Caco-2 (cell line): ENCODE measurements at regions of chr5 and their contacts with region 1.

Region 1: GRCh38 chr5:135944967-135945560 is 9.7 kb downstream of the LECT2 start:
- DNase-seq: peak; percentile 60 to 76
- H3K4me3 ChIP-seq: no peak overlapping the region
- H3K4me3 Mint-ChIP-seq: no peak overlapping the region
- H3K27ac Mint-ChIP-seq: no peak overlapping the region
- H3K4me1 ChIP-seq: peaks cover under 1% of the 10 kb centered on the region; the same call in 1 of the 2 replicates
- H3K4me1 Mint-ChIP-seq: no peaks in the 10 kb centered on the region
- H3K27me3 ChIP-seq: no peaks in the 10 kb centered on the region
- H3K27me3 Mint-ChIP-seq: no peaks in the 10 kb centered on the region
- CTCF ChIP-seq: peak; percentile 79 to 80

Region 2: DNA sequence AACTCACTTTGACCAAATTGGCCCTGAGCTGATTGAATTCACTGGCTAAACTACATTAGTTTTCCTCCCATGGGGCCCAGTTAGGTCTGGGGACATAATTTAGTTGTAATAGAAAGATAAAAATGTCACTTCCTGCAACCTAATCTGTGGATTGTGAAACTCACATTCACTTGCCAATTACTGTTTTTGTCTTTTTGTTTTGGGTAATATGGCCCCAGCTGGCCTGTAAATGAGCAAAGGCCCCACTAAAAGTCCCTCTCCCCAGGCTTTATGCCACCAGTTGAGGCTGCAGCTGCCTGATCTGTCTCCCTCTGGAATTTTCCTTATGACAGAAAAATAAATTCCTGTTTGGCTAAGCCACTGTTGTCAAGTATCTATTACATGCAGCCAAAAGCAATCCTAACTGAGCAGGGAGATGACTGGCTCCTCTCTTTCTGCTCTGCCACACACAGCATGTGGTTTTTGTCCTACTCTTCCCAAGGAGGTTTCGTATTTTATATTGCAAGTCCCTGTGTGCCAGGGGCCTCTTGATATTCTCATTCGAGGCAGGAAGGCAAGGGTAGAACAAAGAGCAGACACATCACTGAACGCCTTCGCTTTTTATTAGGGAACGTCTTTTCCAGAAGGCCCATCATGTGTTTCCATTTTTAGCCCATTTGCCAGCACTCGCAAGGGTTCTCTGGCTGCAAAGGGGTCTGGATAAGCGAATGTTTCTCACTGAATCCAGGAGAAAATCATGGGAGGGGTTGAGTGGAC is 134.7 kb before region 1 on chr5:
- CTCF ChIA-PET with region 1: no interaction called
- POLR2A ChIA-PET with region 1: no interaction called
- intact Hi-C with region 1: no loop called
- DNase-seq: no peak
- H3K4me3 ChIP-seq: no peak overlapping the region
- H3K4me3 Mint-ChIP-seq: no peak overlapping the region
- H3K27ac Mint-ChIP-seq: no peak overlapping the region
- H3K4me1 ChIP-seq: no peaks in the 10 kb centered on the region
- H3K4me1 Mint-ChIP-seq: peaks cover 9% of the 10 kb centered on the region
- H3K27me3 ChIP-seq: no peaks in the 10 kb centered on the region
- H3K27me3 Mint-ChIP-seq: peaks cover 16% of the 10 kb centered on the region
- CTCF ChIP-seq: no peak

Region 3: DNA sequence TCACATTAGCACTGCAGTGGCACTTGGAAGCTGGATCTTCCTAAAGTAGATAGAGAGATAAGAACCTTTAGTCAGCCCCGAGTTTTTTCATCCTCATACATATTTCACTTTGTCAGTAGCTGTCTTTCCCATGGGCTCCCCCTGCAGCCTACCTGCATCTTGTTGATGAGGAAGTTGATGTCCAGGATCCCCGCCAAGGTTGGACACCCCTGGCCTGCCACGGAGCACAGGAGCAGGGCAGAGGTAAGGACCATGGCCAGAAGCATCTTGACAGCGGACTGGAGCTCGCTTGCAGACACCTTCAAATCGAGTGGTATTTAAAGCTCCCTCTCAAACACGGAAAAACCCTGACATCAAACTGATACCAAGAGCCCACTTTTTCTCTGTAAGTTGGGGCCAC is 49.5 kb before region 1 on chr5 and contains the start of gene IL9:
- CTCF ChIA-PET with region 1: no interaction called
- POLR2A ChIA-PET with region 1: no interaction called
- intact Hi-C with region 1: loop called (anchors 2 kb)
- DNase-seq: peak in 1 of 2 experiments; percentile 41
- H3K4me3 ChIP-seq: no peak within 1 kb of the TSS
- H3K4me3 Mint-ChIP-seq: no peak within 1 kb of the TSS
- H3K27ac Mint-ChIP-seq: no peak within 1 kb of the TSS
- H3K4me1 ChIP-seq: peaks cover 23% of the 10 kb centered on the region
- H3K4me1 Mint-ChIP-seq: peaks cover 32% of the 10 kb centered on the region
- H3K27me3 ChIP-seq: no peaks in the 10 kb centered on the region
- H3K27me3 Mint-ChIP-seq: peaks cover 4% of the 10 kb centered on the region
- CTCF ChIP-seq: no peak
- total RNA-seq, gene IL9: 0.79 TPM in 1 of 2 replicates, not detected in the other

Region 4: DNA sequence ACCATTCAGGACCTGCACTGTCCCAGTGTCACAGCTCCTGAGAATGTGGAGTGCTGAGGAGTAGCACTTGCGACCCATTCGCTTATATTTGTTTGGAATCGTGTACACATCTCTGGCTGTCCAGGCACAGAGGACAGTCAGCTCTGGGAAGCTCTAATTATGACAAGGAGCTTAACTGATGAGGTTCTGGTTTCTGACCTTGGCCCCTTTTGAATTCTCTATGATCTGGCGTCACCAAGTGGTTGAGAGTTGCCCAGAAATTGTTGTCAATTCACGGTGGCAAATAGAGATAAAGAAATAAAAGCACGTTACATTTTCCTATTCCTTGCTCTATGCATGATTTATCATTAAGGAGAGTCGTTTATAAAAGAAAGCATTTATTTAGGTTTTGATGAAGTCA is 44.6 kb after region 1 on chr5:
- CTCF ChIA-PET with region 1: no interaction called
- POLR2A ChIA-PET with region 1: no interaction called
- intact Hi-C with region 1: loop called (anchors 1 kb)
- DNase-seq: no peak
- H3K4me3 ChIP-seq: no peak overlapping the region
- H3K4me3 Mint-ChIP-seq: no peak overlapping the region
- H3K27ac Mint-ChIP-seq: no peak overlapping the region
- H3K4me1 ChIP-seq: no peaks in the 10 kb centered on the region
- H3K4me1 Mint-ChIP-seq: no peaks in the 10 kb centered on the region
- H3K27me3 ChIP-seq: no peaks in the 10 kb centered on the region
- H3K27me3 Mint-ChIP-seq: no peaks in the 10 kb centered on the region
- CTCF ChIP-seq: peak in 1 of 2 experiments; percentile 26

Region 5: DNA sequence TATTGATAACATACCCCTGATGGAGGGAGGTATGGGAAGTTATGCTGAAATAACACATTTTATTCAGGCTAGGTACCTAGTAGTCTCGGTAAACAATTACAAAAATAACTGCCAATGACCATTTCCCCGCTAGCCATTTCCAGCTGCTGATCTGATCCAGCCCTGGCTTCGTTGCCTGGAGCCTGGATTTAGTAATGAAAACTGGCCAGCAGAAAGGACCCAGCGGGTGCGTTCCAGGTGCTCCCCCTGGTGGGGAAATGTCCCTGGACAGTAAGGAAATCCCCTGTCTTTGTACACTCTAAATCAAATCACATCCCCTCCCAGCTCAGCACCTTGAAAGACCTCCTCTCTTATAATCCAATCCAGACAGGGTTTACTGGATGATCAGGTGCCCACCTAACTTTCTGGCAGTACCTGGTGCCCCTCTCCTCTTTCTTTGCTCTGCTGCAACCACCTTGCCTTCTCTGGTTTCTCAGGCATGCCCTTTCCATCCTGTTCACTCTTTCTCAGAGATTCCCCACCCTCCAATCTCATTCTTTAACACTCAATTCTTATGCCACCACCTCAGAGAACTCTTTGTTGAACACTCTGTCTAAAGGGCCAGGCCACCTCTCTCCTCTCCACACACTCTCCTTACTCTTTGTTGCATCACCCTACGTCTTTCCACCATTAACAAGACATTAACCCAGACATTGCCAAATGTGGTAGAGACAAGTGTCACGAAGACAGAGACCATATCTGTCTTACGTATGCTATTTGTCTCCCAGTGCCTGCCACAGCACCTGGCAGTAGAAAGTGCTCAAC is 137.5 kb after region 1 on chr5:
- CTCF ChIA-PET with region 1: no interaction called
- POLR2A ChIA-PET with region 1: no interaction called
- intact Hi-C with region 1: loop called (anchors 1 kb)
- DNase-seq: peak; percentile 78 to 85
- H3K4me3 ChIP-seq: no peak overlapping the region
- H3K4me3 Mint-ChIP-seq: no peak overlapping the region
- H3K27ac Mint-ChIP-seq: no peak overlapping the region
- H3K4me1 ChIP-seq: peaks cover 11% of the 10 kb centered on the region
- H3K4me1 Mint-ChIP-seq: no peaks in the 10 kb centered on the region
- H3K27me3 ChIP-seq: no peaks in the 10 kb centered on the region
- H3K27me3 Mint-ChIP-seq: no peaks in the 10 kb centered on the region
- CTCF ChIP-seq: peak; percentile 88

Region 6: GRCh38 chr5:136212252-136212721 is 267.2 kb after region 1 on chr5:
- CTCF ChIA-PET with region 1: no interaction called
- POLR2A ChIA-PET with region 1: no interaction called
- intact Hi-C with region 1: loop called (anchors 1 kb)
- DNase-seq: peak; percentile 68 to 70
- H3K4me3 ChIP-seq: no peak overlapping the region
- H3K4me3 Mint-ChIP-seq: no peak overlapping the region
- H3K27ac Mint-ChIP-seq: no peak overlapping the region
- H3K4me1 ChIP-seq: no peaks in the 10 kb centered on the region
- H3K4me1 Mint-ChIP-seq: no peaks in the 10 kb centered on the region
- H3K27me3 ChIP-seq: no peaks in the 10 kb centered on the region
- H3K27me3 Mint-ChIP-seq: no peaks in the 10 kb centered on the region
- CTCF ChIP-seq: peak; percentile 93 to 94